MCF 10A (cell line): ENCODE measurements at regions of chr10 and their contacts with region 1.

Region 1: GRCh38 chr10:124388823-124389612 is 29.7 kb downstream of the OAT start:
- DNase-seq: peak; percentile 83
- H3K4me3 Mint-ChIP-seq: no peak overlapping the region
- H3K27ac Mint-ChIP-seq: no peak overlapping the region
- H3K4me1 Mint-ChIP-seq: no peaks in the 10 kb centered on the region
- H3K27me3 Mint-ChIP-seq: no peaks in the 10 kb centered on the region
- CTCF ChIP-seq: peak; percentile 92

Region 2: GRCh38 chr10:123582084-123582989 is 806.7 kb before region 1 on chr10:
- CTCF ChIA-PET with region 1: interaction called, 7 read pairs
- POLR2A ChIA-PET with region 1: interaction called, 3 read pairs
- intact Hi-C with region 1: loop called (anchors 1 kb)
- DNase-seq: peak; percentile 76
- H3K4me3 Mint-ChIP-seq: no peak overlapping the region
- H3K27ac Mint-ChIP-seq: no peak overlapping the region
- H3K4me1 Mint-ChIP-seq: no peaks in the 10 kb centered on the region
- H3K27me3 Mint-ChIP-seq: peaks cover 74% of the 10 kb centered on the region
- CTCF ChIP-seq: peak; percentile 73

Region 3: GRCh38 chr10:124063750-124064603 is 325.0 kb before region 1 on chr10:
- CTCF ChIA-PET with region 1: interaction called, 11 read pairs
- POLR2A ChIA-PET with region 1: interaction called, 3 read pairs
- intact Hi-C with region 1: no loop called
- DNase-seq: peak; percentile 81
- H3K4me3 Mint-ChIP-seq: peak overlapping the region; percentile 35
- H3K27ac Mint-ChIP-seq: peak overlapping the region; percentile 78
- H3K4me1 Mint-ChIP-seq: peaks cover 25% of the 10 kb centered on the region
- H3K27me3 Mint-ChIP-seq: no peaks in the 10 kb centered on the region
- CTCF ChIP-seq: no peak

Region 4: DNA sequence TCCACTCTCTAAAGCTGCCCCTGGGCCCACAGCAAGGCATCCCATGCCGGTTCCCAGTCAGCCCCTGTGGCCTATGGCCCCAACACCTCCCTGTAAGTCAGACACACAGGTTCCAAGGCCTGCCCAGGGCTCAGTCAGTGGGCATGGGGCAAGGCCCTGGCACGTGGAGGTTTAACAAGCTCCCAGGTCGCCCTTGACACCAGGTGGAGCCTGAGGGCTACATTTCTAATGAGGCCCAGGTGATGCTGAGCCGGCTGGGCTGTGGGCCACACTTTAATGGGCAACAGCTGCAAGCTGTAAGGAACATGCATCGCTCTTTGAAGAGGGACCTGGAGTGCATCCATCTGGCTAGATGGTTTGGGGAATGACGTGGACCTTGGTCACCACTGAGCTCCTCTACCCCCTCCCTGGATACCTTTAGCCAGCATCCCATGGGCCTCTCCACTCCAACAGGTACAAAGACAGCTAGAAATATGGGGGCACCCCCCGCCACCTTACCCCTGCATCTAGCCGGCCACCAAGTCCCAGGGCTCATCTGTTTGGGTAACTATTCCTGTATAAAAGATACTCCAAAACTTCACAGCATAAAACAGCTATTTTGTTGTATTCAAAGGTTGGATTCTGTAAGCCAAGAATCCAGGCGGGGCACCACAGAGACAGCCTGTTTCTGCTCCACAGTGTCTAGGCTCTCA is 92.8 kb before region 1 on chr10:
- CTCF ChIA-PET with region 1: interaction called, 14 read pairs
- POLR2A ChIA-PET with region 1: interaction called, 3 read pairs
- intact Hi-C with region 1: no loop called
- DNase-seq: peak; percentile 42
- H3K4me3 Mint-ChIP-seq: no peak overlapping the region
- H3K27ac Mint-ChIP-seq: no peak overlapping the region
- H3K4me1 Mint-ChIP-seq: peaks cover 10% of the 10 kb centered on the region
- H3K27me3 Mint-ChIP-seq: no peaks in the 10 kb centered on the region
- CTCF ChIP-seq: no peak

Region 5: DNA sequence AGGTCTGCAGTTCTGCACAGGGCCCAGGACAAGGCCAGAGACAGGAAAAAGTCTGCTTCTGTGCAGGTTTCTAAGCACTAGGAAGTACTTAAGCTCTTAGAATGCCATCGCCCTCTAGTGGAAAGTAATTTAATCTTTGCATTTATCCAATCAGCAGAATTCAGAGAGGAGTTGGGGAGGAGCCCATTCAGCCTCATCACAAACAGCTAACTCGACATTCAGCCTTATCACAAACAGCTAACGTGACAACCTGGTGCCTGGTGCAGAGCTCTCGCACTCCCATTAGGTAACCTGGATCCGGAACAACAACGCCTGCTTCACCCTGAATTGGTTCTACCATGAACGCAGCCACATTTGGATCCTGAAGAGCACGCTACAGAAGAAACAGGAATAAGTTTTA is 14.5 kb after region 1 on chr10:
- CTCF ChIA-PET with region 1: interaction called, 20 read pairs
- POLR2A ChIA-PET with region 1: interaction called, 7 read pairs
- intact Hi-C with region 1: no loop called
- DNase-seq: peak; percentile 81
- H3K4me3 Mint-ChIP-seq: no peak overlapping the region
- H3K27ac Mint-ChIP-seq: no peak overlapping the region
- H3K4me1 Mint-ChIP-seq: no peaks in the 10 kb centered on the region
- H3K27me3 Mint-ChIP-seq: no peaks in the 10 kb centered on the region
- CTCF ChIP-seq: peak; percentile 46